Naive thymus-derived CD4-positive, alpha-beta T cell (primary cell): ENCODE measurements at regions of chr12 and their contacts with region 1.

Region 1: GRCh38 chr12:9813821-9814809 is 13.2 kb upstream of the KLRF1 start:
- DNase-seq: peak; percentile 85 to 98 (median 94)
- ATAC-seq: peak; percentile 99
- H3K4me3 ChIP-seq: peak overlapping the region; percentile 70
- H3K4me3 Mint-ChIP-seq: peak overlapping the region; percentile 85 to 97 (median 92)
- H3K27ac ChIP-seq: peak overlapping the region; percentile 71
- H3K27ac Mint-ChIP-seq: peak overlapping the region; percentile 75 to 97 (median 90)
- H3K4me1 ChIP-seq: no peaks in the 10 kb centered on the region
- H3K4me1 Mint-ChIP-seq: peaks cover 9 to 30% (median 14%) of the 10 kb centered on the region in 7 donors
- H3K27me3 ChIP-seq: no peaks in the 10 kb centered on the region
- H3K27me3 Mint-ChIP-seq: peaks cover 0 to 35% (median 5%) of the 10 kb centered on the region in 5 donors

Region 2: DNA sequence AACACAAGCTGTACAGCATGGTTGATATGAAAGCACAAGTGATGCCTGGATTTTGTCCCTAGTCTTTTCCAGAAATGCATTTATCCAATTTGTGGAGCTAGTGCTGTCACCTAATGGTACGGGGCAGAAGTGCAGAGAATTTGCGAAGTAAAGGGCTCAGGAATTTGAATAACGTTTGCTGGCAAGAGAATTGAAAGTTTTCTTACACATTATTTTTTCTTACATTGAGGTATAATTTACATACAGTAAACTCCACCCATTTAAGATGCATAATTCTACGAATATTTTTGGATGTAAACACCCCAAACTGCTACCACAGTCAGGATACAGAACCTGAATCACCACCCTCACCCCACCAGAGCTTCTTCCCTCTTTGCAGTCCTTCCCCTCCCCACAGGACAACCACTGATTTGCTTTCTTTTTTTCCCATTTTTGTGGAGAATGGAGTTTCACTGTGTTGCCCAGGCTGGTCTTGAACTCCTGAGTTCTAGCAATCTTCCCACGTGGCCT is 1205.0 kb before region 1 on chr12:
- CTCF ChIA-PET with region 1: no interaction called
- POLR2A ChIA-PET with region 1: no interaction called
- intact Hi-C with region 1: no loop called
- DNase-seq: peak in 2 of 9 donors; percentile 3
- ATAC-seq: peak; percentile 40
- H3K4me3 ChIP-seq: no peak overlapping the region
- H3K4me3 Mint-ChIP-seq: peak overlapping the region; percentile 60 to 84 (median 73)
- H3K27ac ChIP-seq: no peak overlapping the region
- H3K27ac Mint-ChIP-seq: peak overlapping the region in 2 of 9 donors; percentile 33 to 38
- H3K4me1 ChIP-seq: no peaks in the 10 kb centered on the region
- H3K4me1 Mint-ChIP-seq: peaks cover 9 to 14% (median 10%) of the 10 kb centered on the region in 7 donors
- H3K27me3 ChIP-seq: no peaks in the 10 kb centered on the region
- H3K27me3 Mint-ChIP-seq: peaks cover 5 to 32% (median 11%) of the 10 kb centered on the region in 5 donors

Region 3: DNA sequence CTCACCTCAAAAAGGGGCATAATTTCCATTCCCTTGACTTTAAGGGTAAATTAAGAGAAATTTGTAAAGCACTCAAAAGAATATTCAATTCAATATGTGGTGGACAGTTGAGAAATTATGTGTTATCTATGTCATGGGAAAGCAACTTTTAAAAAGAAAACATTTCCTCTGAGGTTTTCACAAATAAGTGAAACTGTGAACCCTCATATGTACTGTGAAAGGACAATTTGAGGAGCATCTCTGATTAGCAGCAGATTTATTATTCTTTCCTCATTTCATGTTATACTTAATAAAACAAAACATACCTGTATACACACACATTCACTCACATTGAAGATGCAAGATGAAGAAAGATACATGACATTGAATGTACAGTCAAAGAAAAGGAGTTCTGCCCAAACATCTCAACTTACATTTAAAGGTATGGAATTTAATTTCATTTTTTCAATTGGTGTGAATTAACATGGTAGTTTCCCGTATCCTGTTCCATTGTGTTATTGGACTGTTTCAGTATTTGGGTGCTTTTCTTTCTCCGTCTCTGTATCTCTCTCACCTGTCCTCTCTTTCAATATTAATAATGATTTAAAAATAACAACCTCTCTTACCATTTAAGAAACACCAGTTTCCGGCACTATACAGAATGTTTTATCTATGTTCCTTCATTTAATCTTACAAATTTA is 13.2 kb after region 1 on chr12 and contains the start of gene KLRF1:
- CTCF ChIA-PET with region 1: no interaction called
- POLR2A ChIA-PET with region 1: interaction called, 4 read pairs
- intact Hi-C with region 1: loop called in 1 of 2 experiments (anchors 1 kb)
- DNase-seq: no peak
- ATAC-seq: peak; percentile 42
- H3K4me3 ChIP-seq: no peak within 1 kb of the TSS
- H3K4me3 Mint-ChIP-seq: peak within 1 kb of the TSS in 2 of 10 donors; percentile 16 to 85
- H3K27ac ChIP-seq: no peak within 1 kb of the TSS
- H3K27ac Mint-ChIP-seq: peak within 1 kb of the TSS in 1 of 9 donors; percentile 25
- H3K4me1 ChIP-seq: no peaks in the 10 kb centered on the region
- H3K4me1 Mint-ChIP-seq: peaks cover 0 to 6% (median 3%) of the 10 kb centered on the region in 7 donors
- H3K27me3 ChIP-seq: no peaks in the 10 kb centered on the region
- H3K27me3 Mint-ChIP-seq: peaks cover 0 to 54% (median 0%) of the 10 kb centered on the region in 5 donors
- total RNA-seq, gene KLRF1: 0.35 to 34.8 (median 1.0) TPM

Region 4: GRCh38 chr12:9925708-9926393 is 111.7 kb after region 1 on chr12:
- CTCF ChIA-PET with region 1: interaction called, 43 read pairs
- POLR2A ChIA-PET with region 1: interaction called, 5 read pairs
- intact Hi-C with region 1: loop called (anchors 1 kb)
- DNase-seq: peak in 8 of 9 donors; percentile 7 to 64 (median 50)
- ATAC-seq: peak; percentile 73
- H3K4me3 ChIP-seq: no peak overlapping the region
- H3K4me3 Mint-ChIP-seq: peak overlapping the region; percentile 30 to 85 (median 73)
- H3K27ac ChIP-seq: no peak overlapping the region
- H3K27ac Mint-ChIP-seq: peak overlapping the region in 6 of 9 donors; percentile 5 to 93 (median 44)
- H3K4me1 ChIP-seq: peaks cover 0 to 6% of the 10 kb centered on the region in 2 donors
- H3K4me1 Mint-ChIP-seq: peaks cover 0 to 26% (median 18%) of the 10 kb centered on the region in 7 donors
- H3K27me3 ChIP-seq: no peaks in the 10 kb centered on the region
- H3K27me3 Mint-ChIP-seq: peaks cover 0 to 23% (median 0%) of the 10 kb centered on the region in 5 donors

Region 5: GRCh38 chr12:10001171-10001776 is 187.2 kb after region 1 on chr12:
- CTCF ChIA-PET with region 1: interaction called, 3 read pairs
- POLR2A ChIA-PET with region 1: no interaction called
- intact Hi-C with region 1: loop called in 1 of 2 experiments (anchors 5 kb)
- DNase-seq: no peak
- ATAC-seq: no peak
- H3K4me3 ChIP-seq: no peak overlapping the region
- H3K4me3 Mint-ChIP-seq: no peak overlapping the region
- H3K27ac ChIP-seq: no peak overlapping the region
- H3K27ac Mint-ChIP-seq: no peak overlapping the region
- H3K4me1 ChIP-seq: no peaks in the 10 kb centered on the region
- H3K4me1 Mint-ChIP-seq: peaks cover 0 to 5% (median 0%) of the 10 kb centered on the region in 7 donors
- H3K27me3 ChIP-seq: no peaks in the 10 kb centered on the region
- H3K27me3 Mint-ChIP-seq: peaks cover 0 to 51% (median 0%) of the 10 kb centered on the region in 5 donors

Region 6: GRCh38 chr12:10190558-10191388 is 376.7 kb after region 1 on chr12:
- CTCF ChIA-PET with region 1: interaction called, 7 read pairs
- POLR2A ChIA-PET with region 1: interaction called, 4 read pairs
- intact Hi-C with region 1: loop called (anchors 1 to 2 kb)
- DNase-seq: peak; percentile 21 to 65 (median 48)
- ATAC-seq: peak; percentile 97
- H3K4me3 ChIP-seq: no peak overlapping the region
- H3K4me3 Mint-ChIP-seq: no peak overlapping the region
- H3K27ac ChIP-seq: no peak overlapping the region
- H3K27ac Mint-ChIP-seq: no peak overlapping the region
- H3K4me1 ChIP-seq: no peaks in the 10 kb centered on the region
- H3K4me1 Mint-ChIP-seq: peaks cover 0 to 8% (median 0%) of the 10 kb centered on the region in 7 donors
- H3K27me3 ChIP-seq: no peaks in the 10 kb centered on the region
- H3K27me3 Mint-ChIP-seq: peaks cover 8 to 32% (median 13%) of the 10 kb centered on the region in 5 donors